Caco-2 (cell line): ENCODE measurements at regions of chr13 and their contacts with region 1.

Region 1: DNA sequence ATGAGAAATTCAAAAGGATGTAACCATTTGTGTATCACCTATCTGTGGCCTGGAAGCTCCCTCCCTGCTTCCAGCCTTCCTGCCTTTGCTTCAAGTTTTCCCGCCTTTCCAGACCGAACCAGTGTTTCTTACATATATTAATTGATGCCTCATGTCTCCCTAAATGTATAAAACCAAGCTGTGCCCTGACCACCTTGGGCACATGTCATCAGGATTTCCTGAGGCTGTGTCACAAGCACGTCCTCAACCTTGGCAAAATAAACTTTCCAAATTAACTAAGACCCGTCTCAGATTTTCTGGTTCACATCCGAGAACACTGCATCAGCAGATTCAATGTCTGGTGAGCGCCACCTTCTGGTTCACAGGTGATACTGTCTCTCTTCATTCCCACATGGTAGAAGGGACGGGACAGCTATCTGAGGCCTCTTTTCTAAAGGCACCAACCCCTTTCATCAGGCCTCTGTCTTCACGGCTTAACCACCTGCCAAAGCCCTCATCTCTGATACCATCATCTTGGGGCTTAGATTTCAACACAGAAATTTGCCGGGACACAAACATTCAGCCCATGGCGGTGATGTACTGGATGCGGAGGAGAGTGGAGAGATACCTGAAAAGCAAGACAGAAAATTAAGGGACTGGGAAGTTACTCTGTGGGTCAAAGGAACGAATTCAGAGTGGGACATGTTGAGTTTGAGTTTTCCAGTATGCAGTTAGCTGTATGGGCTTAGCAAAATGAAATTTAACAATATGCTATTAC is 58.7 kb upstream of the PABPC3 start:
- DNase-seq: peak; percentile 57 to 70
- H3K4me3 ChIP-seq: no peak overlapping the region
- H3K4me3 Mint-ChIP-seq: no peak overlapping the region
- H3K27ac Mint-ChIP-seq: no peak overlapping the region
- H3K4me1 ChIP-seq: no peaks in the 10 kb centered on the region
- H3K4me1 Mint-ChIP-seq: no peaks in the 10 kb centered on the region
- H3K27me3 ChIP-seq: no peaks in the 10 kb centered on the region
- H3K27me3 Mint-ChIP-seq: peaks cover 15% of the 10 kb centered on the region
- CTCF ChIP-seq: peak; percentile 84 to 89

Region 2: GRCh38 chr13:24995226-24995804 is 41.9 kb before region 1 on chr13:
- CTCF ChIA-PET with region 1: interaction called, 10 read pairs
- POLR2A ChIA-PET with region 1: no interaction called
- intact Hi-C with region 1: loop called (anchors 1 kb)
- DNase-seq: peak; percentile 79 to 83
- H3K4me3 ChIP-seq: no peak overlapping the region
- H3K4me3 Mint-ChIP-seq: no peak overlapping the region
- H3K27ac Mint-ChIP-seq: no peak overlapping the region
- H3K4me1 ChIP-seq: 0 out of 2 replicates have a peak, but pooled peaks cover 5% of the 10 kb centered on the region
- H3K4me1 Mint-ChIP-seq: no peaks in the 10 kb centered on the region
- H3K27me3 ChIP-seq: no peaks in the 10 kb centered on the region
- H3K27me3 Mint-ChIP-seq: peaks cover 4% of the 10 kb centered on the region
- CTCF ChIP-seq: peak; percentile 83 to 88

Region 3: GRCh38 chr13:25001476-25002206 is 35.6 kb before region 1 on chr13:
- CTCF ChIA-PET with region 1: interaction called, 6 read pairs
- POLR2A ChIA-PET with region 1: no interaction called
- intact Hi-C with region 1: loop called (anchors 1 kb)
- DNase-seq: peak in 1 of 2 experiments; percentile 14
- H3K4me3 ChIP-seq: no peak overlapping the region
- H3K4me3 Mint-ChIP-seq: no peak overlapping the region
- H3K27ac Mint-ChIP-seq: peak overlapping the region; percentile 65
- H3K4me1 ChIP-seq: peaks cover 10% of the 10 kb centered on the region
- H3K4me1 Mint-ChIP-seq: peaks cover 14% of the 10 kb centered on the region
- H3K27me3 ChIP-seq: no peaks in the 10 kb centered on the region
- H3K27me3 Mint-ChIP-seq: no peaks in the 10 kb centered on the region
- CTCF ChIP-seq: no peak